Naive thymus-derived CD4-positive, alpha-beta T cell (primary cell): ENCODE measurements at regions of chr19 and their contacts with region 1.

Region 1: DNA sequence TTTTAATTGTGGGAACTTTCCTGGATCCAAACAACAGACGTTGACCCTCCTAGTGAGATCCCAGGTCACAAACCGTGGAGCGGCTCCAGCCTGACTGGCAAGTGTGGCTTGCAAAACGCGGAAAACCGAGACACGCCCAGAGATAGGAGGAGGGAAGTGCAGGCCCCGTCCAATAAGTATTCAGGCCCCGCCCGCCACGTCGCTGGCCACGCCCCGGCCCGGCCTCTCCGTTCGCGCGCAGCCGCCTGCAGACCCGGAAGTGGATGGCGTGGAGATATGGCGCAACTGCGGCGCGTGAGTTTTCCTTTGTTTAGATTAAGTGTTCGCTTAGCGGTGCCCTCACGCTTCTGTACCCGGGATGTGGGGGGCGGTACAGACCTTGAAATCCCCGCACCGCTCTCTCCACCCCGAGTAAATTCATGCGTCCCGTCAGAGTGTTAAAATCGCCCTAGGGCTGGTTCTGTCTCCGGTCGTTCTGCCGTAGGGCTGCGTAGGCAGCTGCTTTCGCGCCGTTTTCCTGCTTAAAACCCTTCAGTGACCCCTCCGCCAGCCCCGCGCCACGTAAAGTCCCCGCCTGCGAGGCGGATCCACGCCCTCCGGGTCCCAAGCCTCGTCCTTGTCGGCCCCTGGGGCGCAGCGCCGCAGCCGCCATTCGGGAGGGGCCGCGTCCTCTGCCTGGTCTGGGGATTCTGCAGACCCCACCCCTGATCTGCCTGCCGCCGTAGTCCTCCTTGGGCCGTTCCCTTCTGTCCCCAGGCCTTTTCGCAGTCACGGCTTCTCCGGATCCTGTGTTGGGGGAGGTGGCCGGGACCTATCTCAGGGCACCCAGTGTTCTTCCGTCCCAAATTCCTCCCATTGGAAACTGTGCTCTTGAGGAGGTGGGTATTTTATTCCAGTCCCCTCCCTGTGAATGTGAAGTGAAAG is at the start of gene ZNF766:
- DNase-seq: peak; percentile 94 to 97 (median 96)
- ATAC-seq: peak; percentile 100
- H3K4me3 ChIP-seq: peak within 1 kb of the TSS; percentile 94
- H3K4me3 Mint-ChIP-seq: peak within 1 kb of the TSS; percentile 94 to 100 (median 96)
- H3K27ac ChIP-seq: peak within 1 kb of the TSS; percentile 93
- H3K27ac Mint-ChIP-seq: peak within 1 kb of the TSS; percentile 87 to 97 (median 95)
- H3K4me1 ChIP-seq: peaks cover 15 to 16% of the 10 kb centered on the region in 2 donors
- H3K4me1 Mint-ChIP-seq: peaks cover 20 to 53% (median 45%) of the 10 kb centered on the region in 7 donors
- H3K27me3 ChIP-seq: no peaks in the 10 kb centered on the region
- H3K27me3 Mint-ChIP-seq: no peaks in the 10 kb centered on the region
- total RNA-seq, gene ZNF766: 24.7 to 59.6 (median 41.4) TPM

Region 2: GRCh38 chr19:51904331-51905165 is 365.1 kb before region 1 on chr19 and contains the start of gene ZNF649:
- CTCF ChIA-PET with region 1: no interaction called
- POLR2A ChIA-PET with region 1: no interaction called
- intact Hi-C with region 1: loop called in 1 of 2 experiments (anchors 1 kb)
- DNase-seq: peak; percentile 67 to 84 (median 74)
- ATAC-seq: peak; percentile 98
- H3K4me3 ChIP-seq: peak within 1 kb of the TSS; percentile 84
- H3K4me3 Mint-ChIP-seq: peak within 1 kb of the TSS; percentile 87 to 100 (median 99)
- H3K27ac ChIP-seq: peak within 1 kb of the TSS; percentile 84
- H3K27ac Mint-ChIP-seq: peak within 1 kb of the TSS; percentile 89 to 99 (median 97)
- H3K4me1 ChIP-seq: peaks cover 0 to 5% of the 10 kb centered on the region in 2 donors
- H3K4me1 Mint-ChIP-seq: peaks cover 8 to 33% (median 28%) of the 10 kb centered on the region in 7 donors
- H3K27me3 ChIP-seq: no peaks in the 10 kb centered on the region
- H3K27me3 Mint-ChIP-seq: peaks cover 0 to 31% (median 19%) of the 10 kb centered on the region in 5 donors
- total RNA-seq, gene ZNF649: 11.1 to 33.4 (median 14.5) TPM

Region 3: GRCh38 chr19:52171321-52172169 is 98.1 kb before region 1 on chr19 and contains the start of gene ZNF836:
- CTCF ChIA-PET with region 1: no interaction called
- POLR2A ChIA-PET with region 1: no interaction called
- intact Hi-C with region 1: loop called in 1 of 2 experiments (anchors 1 kb)
- DNase-seq: peak; percentile 72 to 95 (median 91)
- ATAC-seq: peak; percentile 98
- H3K4me3 ChIP-seq: peak within 1 kb of the TSS; percentile 92
- H3K4me3 Mint-ChIP-seq: peak within 1 kb of the TSS; percentile 92 to 98 (median 96)
- H3K27ac ChIP-seq: peak within 1 kb of the TSS; percentile 92
- H3K27ac Mint-ChIP-seq: peak within 1 kb of the TSS; percentile 96 to 99 (median 98)
- H3K4me1 ChIP-seq: peaks cover 18 to 19% of the 10 kb centered on the region in 2 donors
- H3K4me1 Mint-ChIP-seq: peaks cover 23 to 48% (median 45%) of the 10 kb centered on the region in 7 donors
- H3K27me3 ChIP-seq: no peaks in the 10 kb centered on the region
- H3K27me3 Mint-ChIP-seq: no peaks in the 10 kb centered on the region
- total RNA-seq, gene ZNF836: 20.1 to 57.5 (median 27.4) TPM

Region 4: GRCh38 chr19:52369559-52370340 is 100.2 kb after region 1 on chr19 and contains the start of gene ZNF880:
- CTCF ChIA-PET with region 1: no interaction called
- POLR2A ChIA-PET with region 1: interaction called, 4 read pairs
- intact Hi-C with region 1: loop called in 1 of 2 experiments (anchors 1 kb)
- DNase-seq: peak; percentile 81 to 92 (median 88)
- ATAC-seq: peak; percentile 97
- H3K4me3 ChIP-seq: peak within 1 kb of the TSS; percentile 100
- H3K4me3 Mint-ChIP-seq: peak within 1 kb of the TSS; percentile 90 to 98 (median 94)
- H3K27ac ChIP-seq: peak within 1 kb of the TSS; percentile 92
- H3K27ac Mint-ChIP-seq: peak within 1 kb of the TSS; percentile 96 to 99 (median 98)
- H3K4me1 ChIP-seq: peaks cover 4 to 5% of the 10 kb centered on the region in 2 donors
- H3K4me1 Mint-ChIP-seq: peaks cover 2 to 19% (median 17%) of the 10 kb centered on the region in 7 donors
- H3K27me3 ChIP-seq: no peaks in the 10 kb centered on the region
- H3K27me3 Mint-ChIP-seq: no peaks in the 10 kb centered on the region
- total RNA-seq, gene ZNF880: 10.3 to 33.5 (median 25.4) TPM

Region 5: DNA sequence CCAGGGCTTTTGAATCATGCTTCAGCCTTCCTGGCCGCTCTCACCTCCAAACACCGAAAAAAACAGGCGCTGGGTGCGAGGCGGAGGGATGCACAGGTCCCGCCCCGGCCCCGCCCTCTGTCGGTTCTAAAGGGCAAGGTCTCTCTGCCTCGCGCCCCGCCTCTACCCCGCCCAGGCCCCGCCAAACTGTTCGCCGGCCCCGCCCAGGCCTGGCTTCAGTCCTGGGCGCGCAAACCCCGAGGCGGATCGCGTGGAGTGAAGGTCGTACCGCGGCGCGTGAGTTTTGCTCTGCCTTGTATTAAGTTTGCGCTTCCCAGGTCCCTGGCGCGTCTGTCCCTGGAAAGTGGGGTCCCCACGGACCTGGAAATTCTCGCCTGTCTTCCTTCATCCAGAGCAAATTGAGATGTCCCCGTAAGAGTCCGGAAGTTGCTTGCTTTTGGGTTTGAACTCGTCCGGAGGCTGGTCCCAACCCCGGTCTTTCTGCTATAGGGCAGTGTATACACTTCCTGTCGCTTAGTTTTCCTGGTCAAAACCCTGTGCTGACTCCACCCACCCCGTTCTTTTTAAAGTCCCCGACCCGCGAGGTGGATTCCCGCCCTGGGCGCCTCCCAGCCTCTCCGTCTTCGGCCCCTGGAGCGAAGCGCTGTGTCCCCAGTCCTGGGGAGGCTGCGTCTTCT is 266.3 kb after region 1 on chr19:
- CTCF ChIA-PET with region 1: no interaction called
- POLR2A ChIA-PET with region 1: no interaction called
- intact Hi-C with region 1: loop called in 1 of 2 experiments (anchors 2 kb)
- DNase-seq: peak; percentile 60 to 87 (median 82)
- ATAC-seq: peak; percentile 99
- H3K4me3 ChIP-seq: peak overlapping the region; percentile 84
- H3K4me3 Mint-ChIP-seq: peak overlapping the region; percentile 83 to 99 (median 90)
- H3K27ac ChIP-seq: peak overlapping the region; percentile 87
- H3K27ac Mint-ChIP-seq: peak overlapping the region; percentile 69 to 95 (median 87)
- H3K4me1 ChIP-seq: no peaks in the 10 kb centered on the region
- H3K4me1 Mint-ChIP-seq: peaks cover 16 to 44% (median 34%) of the 10 kb centered on the region in 7 donors
- H3K27me3 ChIP-seq: no peaks in the 10 kb centered on the region
- H3K27me3 Mint-ChIP-seq: no peaks in the 10 kb centered on the region

Region 6: GRCh38 chr19:52734893-52735661 is 465.5 kb after region 1 on chr19 and contains the start of gene ZNF611:
- CTCF ChIA-PET with region 1: no interaction called
- POLR2A ChIA-PET with region 1: no interaction called
- intact Hi-C with region 1: loop called in 1 of 2 experiments (anchors 1 kb)
- DNase-seq: peak; percentile 97 to 100 (median 98)
- ATAC-seq: peak; percentile 98
- H3K4me3 ChIP-seq: peak within 1 kb of the TSS; percentile 99
- H3K4me3 Mint-ChIP-seq: peak within 1 kb of the TSS; percentile 85 to 96 (median 93)
- H3K27ac ChIP-seq: peak within 1 kb of the TSS; percentile 95
- H3K27ac Mint-ChIP-seq: peak within 1 kb of the TSS; percentile 92 to 98 (median 95)
- H3K4me1 ChIP-seq: peaks cover 0 to 8% of the 10 kb centered on the region in 2 donors
- H3K4me1 Mint-ChIP-seq: peaks cover 14 to 32% (median 24%) of the 10 kb centered on the region in 7 donors
- H3K27me3 ChIP-seq: no peaks in the 10 kb centered on the region
- H3K27me3 Mint-ChIP-seq: no peaks in the 10 kb centered on the region
- total RNA-seq, gene ZNF611: 23.4 to 56.0 (median 36.8) TPM

Region 7: GRCh38 chr19:53333463-53334449 is 1064.2 kb after region 1 on chr19 and contains the start of gene ZNF845:
- CTCF ChIA-PET with region 1: no interaction called
- POLR2A ChIA-PET with region 1: no interaction called
- intact Hi-C with region 1: loop called in 1 of 2 experiments (anchors 1 kb)
- DNase-seq: peak; percentile 91 to 99 (median 97)
- ATAC-seq: peak; percentile 99
- H3K4me3 ChIP-seq: peak within 1 kb of the TSS; percentile 93
- H3K4me3 Mint-ChIP-seq: peak within 1 kb of the TSS; percentile 87 to 97 (median 94)
- H3K27ac ChIP-seq: peak within 1 kb of the TSS; percentile 74
- H3K27ac Mint-ChIP-seq: peak within 1 kb of the TSS; percentile 87 to 97 (median 89)
- H3K4me1 ChIP-seq: peaks cover 0 to 5% of the 10 kb centered on the region in 2 donors
- H3K4me1 Mint-ChIP-seq: peaks cover 14 to 43% (median 22%) of the 10 kb centered on the region in 7 donors
- H3K27me3 ChIP-seq: no peaks in the 10 kb centered on the region
- H3K27me3 Mint-ChIP-seq: peaks cover 0 to 8% (median 6%) of the 10 kb centered on the region in 5 donors
- total RNA-seq, gene ZNF845: 4.6 to 18.9 (median 11.1) TPM